OCI-LY7 (cell line): ENCODE measurements at regions of chr3 and their contacts with region 1.

Region 1: GRCh38 chr3:124491098-124491497 is 239.2 kb upstream of the UMPS start:
- DNase-seq: no peak
- H3K4me3 ChIP-seq: no peak overlapping the region
- H3K27ac ChIP-seq: no peak overlapping the region
- H3K4me1 ChIP-seq: peaks cover 3% of the 10 kb centered on the region
- CTCF ChIP-seq: no peak

Region 2: DNA sequence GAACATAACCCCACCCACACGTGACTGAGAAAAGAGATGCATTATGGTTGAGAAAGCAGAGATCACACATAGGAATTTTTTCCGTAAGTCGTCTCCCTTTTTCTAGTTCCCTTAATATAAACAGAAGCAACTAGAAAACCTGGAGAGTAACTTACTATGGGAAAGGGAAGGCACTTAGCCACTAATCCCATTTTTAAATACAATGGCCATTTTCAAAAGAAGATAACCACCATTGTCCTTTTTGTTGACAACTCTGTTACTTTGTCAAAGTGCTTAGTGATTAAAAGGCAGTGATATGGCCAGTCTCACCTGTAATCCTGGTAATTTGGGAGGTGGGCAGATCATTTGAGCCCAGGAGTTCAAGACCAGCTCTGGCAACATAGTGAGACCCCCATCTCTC is 54.8 kb after region 1 on chr3:
- CTCF ChIA-PET with region 1: no interaction called
- POLR2A ChIA-PET with region 1: interaction called, 11 read pairs
- intact Hi-C with region 1: no loop called
- DNase-seq: no peak
- H3K4me3 ChIP-seq: no peak overlapping the region
- H3K27ac ChIP-seq: no peak overlapping the region
- H3K4me1 ChIP-seq: no peaks in the 10 kb centered on the region
- CTCF ChIP-seq: no peak